ENCODE measurements at regions of chr5 and their contacts with region 1.

Region 1: GRCh38 chr5:149834246-149834855 is 104.2 kb downstream of the PPARGC1B start:
- DNase-seq: peak; percentile 71
- ATAC-seq: peak; percentile 70
- H3K4me3 Mint-ChIP-seq: no peak overlapping the region
- H3K27ac Mint-ChIP-seq: no peak overlapping the region
- H3K4me1 Mint-ChIP-seq: no peaks in the 10 kb centered on the region
- H3K27me3 Mint-ChIP-seq: no peaks in the 10 kb centered on the region
- CTCF ChIP-seq: peak; percentile 35

Region 2: DNA sequence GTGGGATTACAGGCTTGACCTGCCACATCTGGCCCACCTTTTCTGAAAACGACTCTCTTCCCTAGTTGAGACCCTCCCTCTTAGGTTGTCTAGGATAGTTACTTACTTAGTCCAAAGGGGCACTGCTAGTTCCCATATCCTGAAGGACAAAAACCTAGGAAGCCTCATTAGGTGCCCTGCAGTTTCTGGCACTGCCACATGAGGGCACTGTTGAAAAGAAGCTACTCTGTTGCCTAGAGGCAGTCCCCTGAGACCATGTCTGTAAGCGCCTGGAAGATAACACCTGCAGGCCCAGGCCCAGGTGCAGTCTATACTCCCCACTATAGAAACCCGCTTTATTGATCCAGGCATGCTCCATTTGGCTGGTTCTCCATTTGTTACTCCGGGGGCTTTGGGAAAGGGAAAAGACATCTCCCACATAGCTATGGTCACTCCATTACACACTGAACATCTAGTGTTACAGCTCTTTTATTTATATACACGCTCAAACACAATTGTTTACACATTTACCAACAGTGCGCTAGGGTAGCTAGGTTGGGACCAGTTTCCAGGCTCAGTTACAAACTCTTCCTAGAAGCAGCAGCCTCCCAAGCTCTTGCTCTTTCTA is 177.7 kb before region 1 on chr5:
- CTCF ChIA-PET with region 1: interaction called, 23 read pairs
- POLR2A ChIA-PET with region 1: no interaction called
- DNase-seq: peak; percentile 93
- ATAC-seq: peak; percentile 89
- H3K4me3 Mint-ChIP-seq: no peak overlapping the region
- H3K27ac Mint-ChIP-seq: no peak overlapping the region
- H3K4me1 Mint-ChIP-seq: peaks cover 16% of the 10 kb centered on the region
- H3K27me3 Mint-ChIP-seq: no peaks in the 10 kb centered on the region
- CTCF ChIP-seq: peak; percentile 90

Region 3: GRCh38 chr5:149674686-149675085 is 159.7 kb before region 1 on chr5:
- CTCF ChIA-PET with region 1: no interaction called
- POLR2A ChIA-PET with region 1: no interaction called
- DNase-seq: no peak
- ATAC-seq: no peak
- H3K4me3 Mint-ChIP-seq: no peak overlapping the region
- H3K27ac Mint-ChIP-seq: no peak overlapping the region
- H3K4me1 Mint-ChIP-seq: no peaks in the 10 kb centered on the region
- H3K27me3 Mint-ChIP-seq: peaks cover 4% of the 10 kb centered on the region; the same call in 1 of the 2 replicates
- CTCF ChIP-seq: no peak

Region 4: GRCh38 chr5:149788964-149789363 is 45.4 kb before region 1 on chr5:
- CTCF ChIA-PET with region 1: no interaction called
- POLR2A ChIA-PET with region 1: no interaction called
- DNase-seq: no peak
- ATAC-seq: no peak
- H3K4me3 Mint-ChIP-seq: no peak overlapping the region
- H3K27ac Mint-ChIP-seq: no peak overlapping the region
- H3K4me1 Mint-ChIP-seq: peaks cover 5% of the 10 kb centered on the region; the same call in 1 of the 2 replicates
- H3K27me3 Mint-ChIP-seq: no peaks in the 10 kb centered on the region
- CTCF ChIP-seq: no peak

Region 5: GRCh38 chr5:149809931-149810617 is 24.3 kb before region 1 on chr5:
- CTCF ChIA-PET with region 1: interaction called, 11 read pairs
- POLR2A ChIA-PET with region 1: no interaction called
- DNase-seq: no peak
- ATAC-seq: no peak
- H3K4me3 Mint-ChIP-seq: no peak overlapping the region
- H3K27ac Mint-ChIP-seq: peak overlapping the region; percentile 42; the same call in 1 of the 2 replicates
- H3K4me1 Mint-ChIP-seq: peaks cover 52% of the 10 kb centered on the region
- H3K27me3 Mint-ChIP-seq: no peaks in the 10 kb centered on the region
- CTCF ChIP-seq: no peak

Region 6: DNA sequence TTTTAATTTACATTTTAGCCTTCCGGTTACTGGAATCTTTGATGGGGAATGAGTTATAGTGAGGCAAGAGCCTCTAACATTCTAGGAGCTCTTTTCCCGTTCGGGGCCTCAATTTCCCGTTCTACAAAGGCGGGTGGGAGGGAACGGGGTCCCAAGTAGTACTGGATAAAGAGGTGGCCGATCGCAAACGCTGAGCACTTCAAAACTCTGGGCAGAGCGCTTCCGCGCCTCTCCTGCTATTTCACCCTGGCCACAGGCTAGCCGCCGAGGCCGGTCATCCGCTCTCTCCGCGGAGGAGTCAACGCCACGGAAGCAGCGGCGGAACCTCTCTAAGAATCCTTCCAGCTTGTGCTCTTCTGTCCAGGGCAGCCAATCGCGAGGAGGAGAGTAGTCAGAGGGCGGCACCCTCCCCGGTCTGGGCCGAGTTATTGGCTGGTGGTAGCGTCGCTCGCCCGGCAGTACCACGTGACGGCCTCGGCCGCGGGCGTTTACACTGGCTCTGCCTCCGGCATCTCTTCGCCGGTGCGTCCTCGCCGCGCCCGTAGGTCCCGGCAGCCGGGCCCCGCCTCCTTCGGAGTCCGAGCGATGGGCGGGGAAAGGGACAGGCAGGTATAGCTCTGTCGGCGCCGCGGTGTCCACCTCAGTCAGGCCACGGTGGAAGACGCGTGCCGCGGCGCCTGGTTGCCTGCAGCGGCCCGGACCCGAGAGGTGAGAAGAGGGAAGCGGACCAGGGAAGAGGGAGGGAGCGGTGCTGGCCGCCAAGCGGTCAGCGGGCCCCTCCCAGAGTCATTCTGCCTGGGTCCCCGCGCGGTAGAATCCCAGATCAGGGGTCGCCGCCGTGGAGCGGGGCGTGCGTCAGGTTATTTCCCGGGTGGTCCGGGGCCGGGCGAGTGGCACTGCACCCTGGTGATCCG is 126.2 kb after region 1 on chr5 and contains the start of gene SLC26A2:
- CTCF ChIA-PET with region 1: interaction called, 39 read pairs
- POLR2A ChIA-PET with region 1: no interaction called
- DNase-seq: peak; percentile 97
- ATAC-seq: peak; percentile 98
- H3K4me3 Mint-ChIP-seq: peak within 1 kb of the TSS; percentile 79
- H3K27ac Mint-ChIP-seq: peak within 1 kb of the TSS; percentile 99
- H3K4me1 Mint-ChIP-seq: peaks cover 19% of the 10 kb centered on the region
- H3K27me3 Mint-ChIP-seq: peaks cover 8% of the 10 kb centered on the region; the same call in 1 of the 2 replicates
- CTCF ChIP-seq: no peak
- total RNA-seq, gene SLC26A2: 10.8 to 11.1 TPM (median 11.1 TPM) in 3 replicates